Left cardiac atrium (tissue), 4 donors: ENCODE measurements at regions of chr11 and their contacts with region 1.

Region 1: DNA sequence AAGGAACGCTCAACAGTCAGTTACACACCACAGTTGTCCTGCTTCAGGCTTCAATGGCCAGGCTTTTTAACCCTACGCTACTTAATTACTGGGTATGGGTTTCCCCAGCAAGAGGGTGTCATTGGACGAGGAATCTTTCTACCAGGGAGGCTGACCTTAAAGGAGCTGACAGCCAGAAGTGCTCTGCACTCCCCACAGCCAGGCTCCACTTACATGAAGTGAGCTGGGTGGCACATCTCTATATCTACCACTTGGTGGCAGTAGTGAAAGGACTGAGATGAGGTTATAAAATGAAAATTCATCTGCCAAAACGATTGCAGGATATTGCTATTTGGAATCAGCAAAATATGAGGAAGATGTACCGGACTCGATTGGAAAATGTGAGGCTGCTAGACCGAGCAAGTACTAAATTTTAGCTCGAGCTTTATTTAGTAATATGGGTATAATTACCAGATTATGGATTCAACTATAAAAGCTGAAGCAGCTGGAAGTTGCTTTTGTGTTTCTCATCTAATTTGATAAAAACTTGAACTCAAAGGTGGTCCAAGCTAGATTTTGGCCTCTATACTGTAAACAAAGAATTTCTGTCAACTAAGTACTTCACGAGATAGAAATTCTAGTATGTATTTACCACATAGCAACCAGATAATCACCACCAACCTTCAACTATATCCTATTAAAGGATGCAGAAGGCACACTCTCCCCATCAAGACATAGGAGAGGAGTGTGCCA is 53.9 kb upstream of the CEP126 start:
- DNase-seq: peak; percentile 28
- ATAC-seq: peak; percentile 86 to 90

Region 2: GRCh38 chr11:102007567-102008437 is 146.9 kb after region 1 on chr11:
- intact Hi-C with region 1: loop called (anchors 2 to 5 kb)
- DNase-seq: no peak
- ATAC-seq: peak; percentile 41 to 49